HEK293 (cell line): ENCODE measurements at regions of chr2 and their contacts with region 1.

Region 1: GRCh38 chr2:529425-529824 is 147.8 kb downstream of the TMEM18 start:
- H3K4me3 ChIP-seq: no peak overlapping the region
- H3K27ac ChIP-seq: no peak overlapping the region
- H3K4me1 ChIP-seq: no peaks in the 10 kb centered on the region
- CTCF ChIP-seq: peak; percentile 22; the same call in 1 of the 2 replicates

Region 2: DNA sequence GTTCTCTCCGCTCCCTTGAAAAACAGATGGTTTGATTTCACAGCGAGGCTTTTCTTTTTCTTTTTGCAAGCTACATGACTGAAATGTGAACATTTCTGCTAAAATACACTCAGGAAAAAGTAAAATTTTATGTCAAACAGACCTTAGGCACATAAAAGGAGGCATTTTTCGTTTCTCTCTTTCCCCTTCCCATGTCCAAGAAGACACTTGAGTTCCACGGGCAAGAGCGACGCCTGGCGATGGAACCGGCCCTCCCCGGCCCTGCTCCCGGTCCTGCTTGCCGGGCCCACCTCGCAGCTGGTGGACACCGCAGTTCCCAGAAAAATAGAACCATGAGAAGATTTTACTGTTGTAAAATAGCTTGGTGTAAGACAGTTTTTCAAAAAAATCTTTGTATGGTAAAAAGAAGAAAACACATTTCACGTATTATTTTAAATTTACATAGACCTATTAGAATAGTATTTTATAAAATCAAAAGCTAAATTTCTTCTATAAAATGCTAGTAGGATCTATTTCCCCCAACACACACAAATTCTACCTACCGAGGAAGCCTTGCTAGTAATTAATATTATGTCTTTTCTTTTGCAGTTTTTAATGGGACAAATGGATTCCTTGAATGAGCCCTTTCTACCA is 239.2 kb before region 1 on chr2:
- CTCF ChIA-PET with region 1: no interaction called
- POLR2A ChIA-PET with region 1: no interaction called
- H3K4me3 ChIP-seq: no peak overlapping the region
- H3K27ac ChIP-seq: no peak overlapping the region
- H3K4me1 ChIP-seq: no peaks in the 10 kb centered on the region
- CTCF ChIP-seq: no peak

Region 3: DNA sequence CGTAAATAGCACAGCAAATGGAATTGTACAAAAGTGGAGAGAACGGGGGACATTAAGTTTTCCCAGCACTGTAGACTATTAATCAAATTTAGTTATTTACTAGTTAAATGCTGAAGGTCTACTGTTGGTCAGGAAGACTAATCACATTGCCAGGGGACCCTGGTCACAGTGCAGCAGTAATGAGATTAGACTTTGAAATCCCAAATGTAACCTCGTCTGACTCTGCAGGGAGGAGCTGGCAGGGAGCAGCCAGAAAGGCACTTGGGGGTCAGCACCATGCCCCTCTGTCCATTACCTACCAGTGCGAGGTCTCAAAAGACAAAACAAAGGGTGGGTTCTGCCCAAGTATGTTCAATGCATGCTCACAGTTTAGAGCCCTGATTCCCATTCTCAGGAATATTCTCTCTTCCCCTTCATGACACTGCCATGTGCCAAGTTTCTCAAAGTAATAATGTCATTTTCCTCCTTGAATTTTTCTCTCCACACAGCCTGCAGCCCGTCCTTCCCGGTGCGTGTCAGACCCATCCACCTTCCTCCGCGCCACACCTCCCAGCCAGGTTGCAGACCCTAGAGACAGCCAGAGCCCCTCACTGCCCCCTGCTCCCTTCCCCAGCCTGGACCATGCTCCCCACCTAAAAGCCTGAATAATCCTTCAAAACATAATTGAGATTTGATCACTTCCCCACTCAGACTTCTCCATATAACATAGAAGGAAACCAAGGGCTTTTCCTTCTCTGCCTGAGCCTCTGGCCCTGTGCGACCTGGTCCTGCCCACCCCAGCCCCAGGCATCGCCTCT is 95.3 kb after region 1 on chr2:
- CTCF ChIA-PET with region 1: interaction called, 10 read pairs
- POLR2A ChIA-PET with region 1: no interaction called
- H3K4me3 ChIP-seq: no peak overlapping the region
- H3K27ac ChIP-seq: no peak overlapping the region
- H3K4me1 ChIP-seq: no peaks in the 10 kb centered on the region
- CTCF ChIP-seq: no peak

Region 4: DNA sequence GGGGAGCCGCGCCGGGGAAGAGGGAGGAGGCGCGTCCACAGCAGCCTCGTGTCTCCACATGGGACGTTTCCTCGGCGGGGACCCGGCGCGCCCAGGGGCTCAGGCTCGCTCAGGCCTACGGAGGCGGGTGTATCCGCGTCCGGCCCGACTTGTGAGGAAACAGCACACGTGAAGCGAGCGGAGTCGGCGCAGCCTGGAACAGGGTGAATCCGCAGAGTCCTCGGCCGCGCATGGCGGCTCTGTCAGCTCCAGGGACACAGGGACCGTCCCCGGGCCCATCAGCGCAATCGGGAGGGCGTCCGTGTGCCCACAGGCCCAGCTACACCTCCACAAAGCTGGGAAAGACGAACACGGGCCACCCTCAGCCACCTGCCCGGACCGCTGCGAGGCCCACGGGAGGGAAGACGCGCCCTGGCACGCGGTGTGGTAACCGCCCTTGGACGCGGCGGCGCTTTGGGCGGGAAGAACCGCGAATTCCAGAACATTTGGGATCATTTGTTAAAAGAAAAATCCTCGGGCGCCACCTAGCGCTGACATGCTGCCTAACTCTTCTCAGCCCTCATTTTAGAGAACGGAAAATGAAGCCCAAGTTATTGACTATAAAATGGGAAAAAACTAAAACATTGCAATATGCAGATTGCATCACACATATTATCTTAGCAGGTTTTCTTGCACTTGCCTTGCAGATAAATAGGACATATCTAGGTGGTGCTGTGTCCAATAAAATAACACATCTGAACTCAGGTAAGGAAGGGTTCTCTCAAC is 107.4 kb after region 1 on chr2:
- CTCF ChIA-PET with region 1: interaction called, 27 read pairs
- POLR2A ChIA-PET with region 1: no interaction called
- H3K4me3 ChIP-seq: no peak overlapping the region
- H3K27ac ChIP-seq: no peak overlapping the region
- H3K4me1 ChIP-seq: no peaks in the 10 kb centered on the region
- CTCF ChIP-seq: peak; percentile 58; the same call in 1 of the 2 replicates